ENCODE measurements at regions of chr1 and their contacts with region 1.

Region 1: DNA sequence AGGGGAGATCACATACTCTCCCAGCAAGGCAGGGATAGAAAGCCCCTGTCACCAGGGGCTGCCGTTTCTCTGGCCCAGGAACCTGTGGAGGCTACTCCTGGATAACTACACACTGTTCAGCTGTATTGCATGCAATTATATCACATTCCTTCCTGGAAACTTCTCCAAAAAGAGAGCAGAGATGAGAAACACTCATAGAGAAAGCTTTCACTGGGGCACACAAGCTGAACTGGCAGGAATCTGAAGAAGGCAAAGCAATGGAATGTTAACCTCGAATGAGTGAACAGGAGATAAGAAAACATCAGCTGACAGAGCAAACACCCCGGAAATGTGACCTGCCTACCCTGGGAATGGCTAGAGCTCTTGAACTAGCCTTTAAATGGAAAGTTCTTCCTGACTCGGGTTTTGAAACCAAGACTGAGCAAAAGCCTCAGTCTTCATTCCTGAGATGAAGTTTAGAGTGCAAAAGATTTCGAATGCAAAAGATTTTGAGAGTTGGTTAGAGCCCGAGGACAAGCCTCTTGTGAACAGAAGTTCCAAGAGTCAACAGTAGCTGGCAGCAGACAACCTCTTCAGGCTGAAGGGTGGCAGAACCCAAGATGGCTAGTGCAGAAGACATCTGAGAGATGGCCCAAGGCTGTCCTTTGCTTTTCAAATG is 32.3 kb downstream of the CCN1 start:
- DNase-seq: peak; percentile 72
- H3K4me3 ChIP-seq: no peak overlapping the region
- H3K27me3 ChIP-seq: no peaks in the 10 kb centered on the region
- CTCF ChIP-seq: peak; percentile 77

Region 2: DNA sequence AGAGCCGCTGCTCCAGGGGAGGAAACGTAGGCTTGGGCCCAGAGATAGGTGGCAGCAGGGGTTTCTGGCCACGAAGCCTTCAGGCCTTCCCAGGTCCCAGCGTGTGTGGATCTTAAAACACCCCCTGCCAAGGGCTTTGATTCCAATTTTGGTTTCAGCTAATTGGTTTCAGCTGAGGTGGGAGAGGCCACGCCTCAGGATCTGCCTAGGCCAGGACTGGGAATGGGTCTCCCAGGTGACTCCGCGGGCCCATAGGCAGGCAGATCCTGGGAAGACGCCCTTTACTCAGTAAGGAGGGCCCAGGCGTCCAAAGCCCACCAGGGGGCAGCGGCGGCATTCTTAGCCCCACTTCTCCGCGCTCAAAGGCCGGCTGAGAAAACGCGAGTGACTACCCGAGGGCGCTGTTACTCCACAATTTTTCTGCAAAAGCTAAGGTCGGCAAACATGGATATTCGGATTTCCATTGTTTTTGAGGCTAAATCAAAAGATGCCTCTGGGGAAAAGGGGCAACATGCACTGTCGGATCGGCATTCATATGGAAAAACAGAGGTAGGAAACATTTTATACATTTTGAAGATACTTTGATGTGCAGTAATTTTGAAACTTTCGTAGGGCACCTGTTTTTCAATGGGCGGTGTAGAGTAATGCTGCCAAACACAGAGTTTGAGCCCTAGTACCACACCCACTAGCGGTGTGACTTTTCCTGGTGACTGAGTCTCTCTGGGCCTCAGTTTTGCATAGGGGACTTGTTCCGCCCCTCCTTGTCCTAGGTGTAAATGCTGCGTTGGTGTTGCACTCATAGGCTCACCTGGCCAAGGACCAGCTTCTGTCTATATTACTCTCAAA is 304.6 kb before region 1 on chr1:
- CTCF ChIA-PET with region 1: interaction called, 20 read pairs
- POLR2A ChIA-PET with region 1: interaction called, 4 read pairs
- DNase-seq: no peak
- H3K4me3 ChIP-seq: no peak overlapping the region
- H3K27me3 ChIP-seq: no peaks in the 10 kb centered on the region
- CTCF ChIP-seq: peak; percentile 98

Region 3: DNA sequence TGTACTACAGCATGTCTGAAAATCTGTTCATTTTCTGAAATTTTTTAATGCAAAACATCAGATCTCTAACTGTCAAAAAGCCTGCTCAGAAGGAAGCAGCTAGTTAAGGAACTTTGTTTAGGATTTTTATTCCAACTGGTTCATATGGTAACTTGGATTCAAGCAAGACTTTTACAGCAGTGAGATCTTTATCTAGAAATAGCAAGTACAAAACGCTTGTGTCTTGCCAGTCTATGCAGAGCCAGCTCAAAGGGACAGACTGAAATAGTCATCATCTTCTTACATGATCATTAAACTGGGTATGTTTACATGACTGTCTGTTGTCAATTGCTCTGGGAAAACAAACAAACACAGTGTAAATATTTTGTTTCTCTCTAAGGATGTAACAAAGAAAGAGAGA is 185.5 kb before region 1 on chr1:
- CTCF ChIA-PET with region 1: no interaction called
- POLR2A ChIA-PET with region 1: no interaction called
- DNase-seq: peak; percentile 20
- H3K4me3 ChIP-seq: no peak overlapping the region
- H3K27me3 ChIP-seq: no peaks in the 10 kb centered on the region
- CTCF ChIP-seq: no peak

Region 4: DNA sequence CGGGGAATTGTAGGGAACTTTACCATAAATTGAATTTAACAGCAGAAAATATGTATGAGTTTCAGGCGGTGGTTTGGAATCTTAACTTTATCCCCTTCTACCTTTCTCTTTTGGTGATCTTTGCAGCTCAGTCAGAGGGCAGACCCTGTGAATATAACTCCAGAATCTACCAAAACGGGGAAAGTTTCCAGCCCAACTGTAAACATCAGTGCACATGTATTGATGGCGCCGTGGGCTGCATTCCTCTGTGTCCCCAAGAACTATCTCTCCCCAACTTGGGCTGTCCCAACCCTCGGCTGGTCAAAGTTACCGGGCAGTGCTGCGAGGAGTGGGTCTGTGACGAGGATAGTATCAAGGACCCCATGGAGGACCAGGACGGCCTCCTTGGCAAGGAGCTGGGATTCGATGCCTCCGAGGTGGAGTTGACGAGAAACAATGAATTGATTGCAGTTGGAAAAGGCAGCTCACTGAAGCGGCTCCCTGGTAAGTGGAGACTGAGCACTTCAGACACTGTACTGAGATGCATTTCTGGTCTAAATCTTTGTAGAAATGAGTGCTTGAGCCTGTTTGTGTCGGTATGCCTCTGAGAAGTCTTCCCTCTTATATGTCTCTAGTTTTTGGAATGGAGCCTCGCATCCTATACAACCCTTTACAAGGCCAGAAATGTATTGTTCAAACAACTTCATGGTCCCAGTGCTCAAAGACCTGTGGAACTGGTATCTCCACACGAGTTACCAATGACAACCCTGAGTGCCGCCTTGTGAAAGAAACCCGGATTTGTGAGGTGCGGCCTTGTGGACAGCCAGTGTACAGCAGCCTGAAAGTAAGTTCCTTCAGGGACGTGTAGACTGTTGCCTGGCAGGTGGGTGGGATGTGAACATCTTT is 30.8 kb before region 1 on chr1:
- CTCF ChIA-PET with region 1: interaction called, 34 read pairs
- POLR2A ChIA-PET with region 1: interaction called, 51 read pairs
- DNase-seq: no peak
- H3K4me3 ChIP-seq: peak overlapping the region; percentile 86
- H3K27me3 ChIP-seq: no peaks in the 10 kb centered on the region
- CTCF ChIP-seq: peak; percentile 48

Region 5: GRCh38 chr1:85659174-85659573 is 46.3 kb after region 1 on chr1:
- CTCF ChIA-PET with region 1: no interaction called
- POLR2A ChIA-PET with region 1: interaction called, 19 read pairs
- DNase-seq: no peak
- H3K4me3 ChIP-seq: no peak overlapping the region
- H3K27me3 ChIP-seq: no peaks in the 10 kb centered on the region
- CTCF ChIP-seq: no peak

Region 6: DNA sequence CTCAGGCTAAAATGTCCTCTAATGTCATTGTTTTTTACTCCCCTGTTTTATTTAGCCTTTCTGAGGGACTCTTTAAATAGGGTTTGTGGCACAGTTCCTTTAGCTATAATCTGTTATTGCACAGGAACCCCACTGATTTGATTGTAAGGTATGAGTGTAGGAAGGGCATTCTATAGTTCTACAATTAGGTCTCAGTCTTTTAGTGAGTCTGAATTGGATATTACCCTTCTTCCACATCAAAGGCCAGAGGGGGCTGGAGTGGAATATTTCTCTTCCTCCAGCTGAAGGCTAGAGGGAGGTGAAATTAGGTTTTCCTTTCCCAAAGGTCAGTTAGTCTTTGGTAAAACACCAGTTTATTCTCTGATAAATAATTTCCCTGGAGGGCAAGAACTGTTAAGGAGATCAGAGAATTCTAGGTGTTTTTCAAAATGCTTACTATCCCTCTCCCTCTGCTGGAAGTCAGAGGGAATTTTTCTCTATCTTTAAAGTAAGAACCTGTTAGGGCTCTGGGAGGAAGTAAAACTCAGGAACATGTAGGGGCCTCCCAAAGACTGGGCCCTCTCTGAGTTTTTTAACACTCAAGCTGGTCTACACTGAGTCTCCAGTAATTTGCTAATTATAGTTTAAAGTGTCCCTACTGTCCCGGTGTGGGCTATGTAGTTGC is 271.7 kb after region 1 on chr1:
- CTCF ChIA-PET with region 1: interaction called, 3 read pairs
- POLR2A ChIA-PET with region 1: interaction called, 11 read pairs
- DNase-seq: no peak
- H3K4me3 ChIP-seq: no peak overlapping the region
- H3K27me3 ChIP-seq: no peaks in the 10 kb centered on the region
- CTCF ChIP-seq: peak; percentile 72

Region 7: DNA sequence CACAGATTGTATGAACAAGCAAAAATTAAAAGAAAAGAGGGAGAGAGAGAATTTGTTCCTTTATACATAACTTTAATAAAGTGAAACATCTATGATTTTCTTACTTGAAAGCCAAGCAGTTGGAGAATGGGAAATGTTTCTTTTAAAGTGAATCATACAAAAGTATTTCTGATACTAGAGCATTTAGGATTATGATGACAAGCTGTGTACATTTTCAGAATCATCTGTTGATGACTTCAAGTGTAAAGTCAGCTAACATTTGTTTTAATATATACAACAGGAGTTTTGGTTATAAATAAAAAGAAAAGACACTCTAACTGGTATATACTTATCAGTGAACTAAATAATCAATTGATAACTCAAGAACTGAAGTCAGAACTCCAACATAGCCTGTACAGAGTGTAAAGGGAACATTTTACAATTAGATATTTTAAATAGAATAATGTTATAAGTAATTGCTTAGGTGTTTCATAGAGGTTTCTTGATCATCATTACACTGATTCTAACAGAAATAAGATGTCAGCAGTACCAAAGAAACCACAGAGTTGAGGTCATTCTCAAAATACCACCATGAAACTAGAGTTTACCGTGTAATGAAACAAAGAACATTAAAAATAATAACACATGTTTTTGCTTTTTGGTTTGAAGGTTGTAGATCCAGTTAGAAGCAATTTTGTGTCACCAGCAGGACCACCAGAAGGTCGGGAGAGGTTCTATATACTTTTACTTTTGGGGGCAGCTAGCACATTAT is 440.3 kb after region 1 on chr1:
- CTCF ChIA-PET with region 1: no interaction called
- POLR2A ChIA-PET with region 1: no interaction called
- DNase-seq: no peak
- H3K4me3 ChIP-seq: no peak overlapping the region
- H3K27me3 ChIP-seq: no peaks in the 10 kb centered on the region
- CTCF ChIP-seq: no peak

Measured in BJ (cell line).